ENCODE measurements at regions of chr1 and their contacts with region 1.

Region 1: DNA sequence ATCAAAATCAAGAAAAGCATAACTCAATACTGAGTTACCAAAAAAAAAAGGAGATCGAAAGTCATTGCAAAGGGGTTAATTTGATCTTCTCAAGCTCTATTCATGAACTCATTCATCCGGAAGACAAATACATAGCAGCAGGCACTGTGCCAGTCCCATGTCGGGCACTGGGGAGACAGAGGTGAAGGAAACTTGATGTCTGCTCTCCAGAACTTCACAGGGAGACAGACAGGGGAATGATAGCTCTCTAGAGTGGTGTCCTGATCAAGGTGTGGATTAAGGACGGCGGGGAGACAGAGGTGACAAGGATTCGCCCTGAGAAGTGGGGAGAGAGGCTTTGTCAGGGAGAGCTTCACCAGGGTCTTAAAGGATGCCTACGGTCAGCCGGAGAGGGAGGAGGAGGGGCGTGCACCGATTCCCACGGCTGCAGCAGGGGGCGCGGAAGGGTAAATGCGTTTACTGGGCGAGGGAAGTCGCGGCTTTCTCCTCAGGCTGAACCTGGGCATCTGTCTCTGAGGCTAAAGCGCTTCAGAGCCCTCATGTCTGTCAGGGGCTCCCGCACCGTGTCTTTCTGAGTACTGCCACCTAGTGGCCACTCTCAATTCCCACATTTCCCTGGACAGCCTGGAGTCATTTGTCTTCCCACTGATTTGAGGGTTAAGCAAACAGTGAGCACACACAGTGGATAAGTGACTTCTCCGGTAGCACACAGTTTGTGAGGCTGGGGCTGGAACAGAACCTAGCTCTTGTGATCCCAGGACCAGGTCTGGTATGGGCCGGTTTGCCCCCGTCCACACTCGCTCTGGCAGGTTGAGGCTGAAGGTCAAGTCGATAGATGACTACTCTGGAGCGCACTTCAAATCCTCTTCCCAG is 152.8 kb downstream of the TENT5C start:
- DNase-seq: peak; percentile 69
- H3K4me3 ChIP-seq: peak overlapping the region; percentile 51
- H3K27ac ChIP-seq: no peak overlapping the region
- H3K27me3 ChIP-seq: no peaks in the 10 kb centered on the region
- CTCF ChIP-seq: peak; percentile 87

Region 2: GRCh38 chr1:116697548-116698243 is 1061.0 kb before region 1 on chr1:
- CTCF ChIA-PET with region 1: no interaction called
- POLR2A ChIA-PET with region 1: no interaction called
- DNase-seq: no peak
- H3K4me3 ChIP-seq: no peak overlapping the region
- H3K27ac ChIP-seq: no peak overlapping the region
- H3K27me3 ChIP-seq: no peaks in the 10 kb centered on the region
- CTCF ChIP-seq: no peak

Region 3: DNA sequence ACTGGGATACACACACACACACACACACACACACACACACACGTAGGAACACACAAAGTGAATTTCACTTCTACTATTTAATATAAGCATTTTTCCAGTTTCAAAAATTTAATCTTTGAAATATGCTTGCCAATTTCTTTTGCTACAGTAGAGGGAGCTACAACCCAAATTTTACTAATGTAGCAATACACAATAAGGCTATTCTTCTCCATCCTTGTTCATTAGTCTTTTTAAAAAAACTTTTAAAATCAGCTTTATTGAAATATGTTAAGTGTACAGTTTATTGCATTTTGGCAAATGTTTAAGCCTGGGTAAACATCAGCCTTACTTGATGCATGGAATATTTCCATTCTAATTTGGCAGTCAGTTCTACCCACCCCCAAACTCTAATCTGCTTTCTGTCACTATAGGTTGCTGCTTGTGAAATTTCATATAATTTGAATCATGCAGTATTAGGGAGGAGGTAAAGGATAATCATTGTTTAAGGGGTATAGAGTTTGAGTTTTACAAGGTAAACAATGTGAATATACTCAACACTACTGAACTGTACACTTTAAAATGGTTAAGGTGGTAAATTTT is 245.8 kb before region 1 on chr1:
- CTCF ChIA-PET with region 1: interaction called, 173 read pairs
- POLR2A ChIA-PET with region 1: no interaction called
- DNase-seq: no peak
- H3K4me3 ChIP-seq: no peak overlapping the region
- H3K27ac ChIP-seq: no peak overlapping the region
- H3K27me3 ChIP-seq: no peaks in the 10 kb centered on the region
- CTCF ChIP-seq: peak; percentile 64

Region 4: GRCh38 chr1:117605774-117606648 is 152.7 kb before region 1 on chr1 and contains the start of gene TENT5C:
- CTCF ChIA-PET with region 1: interaction called, 32 read pairs
- POLR2A ChIA-PET with region 1: interaction called, 9 read pairs
- DNase-seq: peak; percentile 95
- H3K4me3 ChIP-seq: peak within 1 kb of the TSS; percentile 91
- H3K27ac ChIP-seq: peak within 1 kb of the TSS; percentile 11
- H3K27me3 ChIP-seq: peaks cover 12% of the 10 kb centered on the region
- CTCF ChIP-seq: peak; percentile 19; the same call in 1 of the 2 replicates
- polyA plus RNA-seq, gene TENT5C: 29.2 and 30.6 TPM in 2 replicates

Region 5: DNA sequence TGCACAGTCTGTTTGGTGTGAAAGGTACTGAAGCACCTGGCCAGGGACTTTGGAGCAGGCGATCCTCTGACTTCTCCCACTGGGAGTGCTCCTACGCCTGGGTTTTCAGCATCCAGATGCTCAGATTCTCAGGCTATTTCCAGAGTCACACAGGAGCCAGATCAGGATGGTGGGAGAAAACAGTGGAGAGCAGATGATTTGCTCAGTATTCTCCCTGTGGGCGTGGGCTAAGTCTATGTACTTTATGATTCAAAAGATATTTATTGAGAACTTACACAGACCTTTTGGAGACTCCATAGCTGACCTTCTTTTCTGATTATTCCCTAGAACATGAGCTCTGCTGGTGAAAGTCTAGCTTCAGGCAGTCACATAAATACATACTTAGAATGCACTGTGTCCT is 18.2 kb before region 1 on chr1:
- CTCF ChIA-PET with region 1: interaction called, 25 read pairs
- POLR2A ChIA-PET with region 1: interaction called, 3 read pairs
- DNase-seq: no peak
- H3K4me3 ChIP-seq: no peak overlapping the region
- H3K27ac ChIP-seq: no peak overlapping the region
- H3K27me3 ChIP-seq: no peaks in the 10 kb centered on the region
- CTCF ChIP-seq: no peak

Region 6: DNA sequence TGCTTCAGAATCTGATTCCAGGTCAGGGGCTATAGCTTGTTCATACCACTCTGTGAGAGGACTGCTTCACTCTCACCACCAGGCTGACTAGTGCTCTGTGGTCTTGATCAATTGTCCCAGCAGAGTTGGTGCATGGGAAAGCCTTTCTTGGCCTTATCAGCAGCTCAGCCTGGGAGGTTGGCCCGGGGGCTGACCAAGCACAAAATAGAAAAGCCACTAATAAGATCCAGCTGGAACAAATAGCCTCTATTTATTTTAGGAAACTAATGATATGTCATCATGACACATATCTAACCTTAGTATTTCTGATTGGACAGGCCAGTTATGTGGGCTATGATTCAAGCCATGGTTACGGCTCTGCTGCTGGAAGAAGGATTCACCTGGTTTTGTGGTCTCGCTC is 36.5 kb after region 1 on chr1:
- CTCF ChIA-PET with region 1: interaction called, 16 read pairs
- POLR2A ChIA-PET with region 1: no interaction called
- DNase-seq: peak; percentile 73
- H3K4me3 ChIP-seq: no peak overlapping the region
- H3K27ac ChIP-seq: no peak overlapping the region
- H3K27me3 ChIP-seq: no peaks in the 10 kb centered on the region
- CTCF ChIP-seq: peak; percentile 50

Region 7: DNA sequence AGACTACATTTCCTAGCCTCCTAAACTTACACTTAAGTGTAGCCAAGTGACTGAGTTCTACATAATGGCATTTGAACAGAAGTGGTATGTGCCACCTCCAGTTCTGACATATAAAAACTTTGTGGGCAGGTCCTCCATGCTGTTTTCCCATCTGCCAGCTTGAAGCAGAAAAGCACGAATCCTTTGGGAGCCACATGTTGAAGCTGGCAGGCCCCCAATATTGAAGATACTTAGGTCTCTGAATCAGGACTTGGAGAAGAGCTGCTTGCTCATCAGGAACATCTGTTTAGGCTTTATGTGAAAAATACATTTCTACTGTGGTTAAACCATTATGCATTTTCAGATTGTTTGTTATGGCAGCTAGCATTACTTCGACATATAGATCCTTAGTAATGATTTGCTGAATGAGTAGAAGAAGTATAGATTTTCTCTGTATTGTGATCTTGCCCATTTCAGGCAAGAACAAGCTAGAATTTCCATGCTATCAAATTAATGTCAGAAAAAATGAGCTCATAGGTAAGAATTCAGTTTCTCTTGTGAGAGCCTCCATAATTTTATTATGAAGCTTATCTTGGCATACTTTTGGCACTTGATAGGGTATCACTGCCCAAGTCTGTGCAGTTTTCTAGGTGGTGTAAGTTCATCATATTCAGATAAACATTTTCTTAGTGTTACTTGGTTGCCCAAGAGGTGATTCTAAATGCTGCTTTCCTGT is 102.4 kb after region 1 on chr1:
- CTCF ChIA-PET with region 1: interaction called, 10 read pairs
- POLR2A ChIA-PET with region 1: no interaction called
- DNase-seq: peak; percentile 76
- H3K4me3 ChIP-seq: no peak overlapping the region
- H3K27ac ChIP-seq: no peak overlapping the region
- H3K27me3 ChIP-seq: no peaks in the 10 kb centered on the region
- CTCF ChIP-seq: no peak

Region 8: GRCh38 chr1:117959364-117959763 is 200.7 kb after region 1 on chr1:
- CTCF ChIA-PET with region 1: no interaction called
- POLR2A ChIA-PET with region 1: no interaction called
- DNase-seq: no peak
- H3K4me3 ChIP-seq: no peak overlapping the region
- H3K27ac ChIP-seq: no peak overlapping the region
- H3K27me3 ChIP-seq: no peaks in the 10 kb centered on the region
- CTCF ChIP-seq: no peak

Region 9: DNA sequence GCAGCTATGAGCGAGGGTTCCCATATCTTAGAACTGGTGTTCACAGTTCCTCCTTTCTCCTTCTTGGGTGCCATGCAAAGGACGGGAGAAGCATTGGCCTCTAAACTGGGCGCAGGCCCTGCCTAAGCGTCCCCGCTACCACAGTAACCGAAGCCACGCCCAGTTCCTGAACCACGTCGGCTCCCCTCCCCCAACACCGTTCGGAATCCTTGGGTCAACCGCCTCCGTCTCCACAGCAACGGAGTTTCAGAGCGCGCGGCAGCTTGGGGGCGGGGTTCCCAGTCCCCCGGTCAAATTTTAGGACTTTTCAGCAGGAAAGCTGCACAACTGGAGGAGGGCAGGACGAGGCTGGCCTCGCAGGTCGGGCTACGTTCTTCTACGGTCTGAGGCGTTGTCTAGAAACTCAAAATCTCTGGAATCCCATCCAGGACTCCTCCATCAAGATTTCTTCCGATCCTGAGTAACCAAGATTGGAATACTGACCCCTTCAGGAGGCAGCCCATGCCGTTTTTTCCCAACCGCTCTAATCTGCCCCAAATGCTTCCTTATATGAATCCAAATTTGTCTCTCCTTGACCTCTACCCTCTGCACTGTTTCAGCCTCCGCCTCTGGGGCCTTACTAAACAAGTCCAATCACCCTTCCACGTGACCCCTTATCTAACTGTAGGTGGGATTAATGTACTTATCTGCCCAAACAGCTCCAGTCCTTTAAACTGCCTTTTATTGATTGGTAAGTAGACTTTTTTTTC is 426.6 kb after region 1 on chr1 and contains the start of gene SPAG17:
- CTCF ChIA-PET with region 1: no interaction called
- POLR2A ChIA-PET with region 1: no interaction called
- DNase-seq: no peak
- H3K4me3 ChIP-seq: peak within 1 kb of the TSS; percentile 48
- H3K27ac ChIP-seq: no peak within 1 kb of the TSS
- H3K27me3 ChIP-seq: no peaks in the 10 kb centered on the region
- CTCF ChIP-seq: peak; percentile 39
- polyA plus RNA-seq, gene SPAG17: 0.07 TPM in 1 of 2 replicates, not detected in the other